Naive thymus-derived CD4-positive, alpha-beta T cell (primary cell): ENCODE measurements at regions of chr9 and their contacts with region 1.

Region 1: GRCh38 chr9:20490246-20490834 is 132.0 kb downstream of the MLLT3 start:
- DNase-seq: no peak
- ATAC-seq: no peak
- H3K4me3 ChIP-seq: no peak overlapping the region
- H3K4me3 Mint-ChIP-seq: peak overlapping the region in 4 of 10 donors; percentile 23 to 35 (median 30)
- H3K27ac ChIP-seq: no peak overlapping the region
- H3K27ac Mint-ChIP-seq: peak overlapping the region in 1 of 9 donors; percentile 48
- H3K4me1 ChIP-seq: peaks cover 0 to 24% of the 10 kb centered on the region in 2 donors
- H3K4me1 Mint-ChIP-seq: peaks cover 20 to 85% (median 70%) of the 10 kb centered on the region in 7 donors
- H3K27me3 ChIP-seq: no peaks in the 10 kb centered on the region
- H3K27me3 Mint-ChIP-seq: no peaks in the 10 kb centered on the region

Region 2: DNA sequence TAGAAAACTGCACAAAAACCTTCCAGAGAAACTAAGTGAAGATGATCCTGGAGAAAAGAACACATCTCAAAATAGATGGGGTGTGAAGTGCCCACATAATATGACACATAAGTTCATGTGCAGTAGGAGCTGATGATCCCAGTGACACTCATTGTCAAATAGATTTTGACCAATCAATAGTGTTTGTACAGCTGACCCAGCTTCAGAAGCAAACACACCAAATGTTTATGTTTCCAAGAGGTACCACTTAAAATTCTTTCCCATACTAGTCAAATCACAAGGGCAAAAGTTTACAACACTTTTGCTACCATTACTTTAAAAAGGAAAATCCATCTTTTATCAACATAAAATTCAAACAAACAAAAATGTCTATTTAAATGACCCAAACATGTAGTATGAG is 43.0 kb before region 1 on chr9:
- CTCF ChIA-PET with region 1: no interaction called
- POLR2A ChIA-PET with region 1: no interaction called
- intact Hi-C with region 1: loop called in 1 of 2 experiments (anchors 5 kb)
- DNase-seq: no peak
- ATAC-seq: no peak
- H3K4me3 ChIP-seq: no peak overlapping the region
- H3K4me3 Mint-ChIP-seq: no peak overlapping the region
- H3K27ac ChIP-seq: no peak overlapping the region
- H3K27ac Mint-ChIP-seq: no peak overlapping the region
- H3K4me1 ChIP-seq: peaks cover 0 to 8% of the 10 kb centered on the region in 2 donors
- H3K4me1 Mint-ChIP-seq: peaks cover 14 to 56% (median 35%) of the 10 kb centered on the region in 7 donors
- H3K27me3 ChIP-seq: no peaks in the 10 kb centered on the region
- H3K27me3 Mint-ChIP-seq: no peaks in the 10 kb centered on the region

Region 3: GRCh38 chr9:20479419-20480155 is 10.8 kb before region 1 on chr9:
- CTCF ChIA-PET with region 1: interaction called, 3 read pairs
- POLR2A ChIA-PET with region 1: no interaction called
- intact Hi-C with region 1: loop called in 1 of 2 experiments (anchors 2 kb)
- DNase-seq: no peak
- ATAC-seq: no peak
- H3K4me3 ChIP-seq: no peak overlapping the region
- H3K4me3 Mint-ChIP-seq: no peak overlapping the region
- H3K27ac ChIP-seq: no peak overlapping the region
- H3K27ac Mint-ChIP-seq: peak overlapping the region in 1 of 9 donors; percentile 60
- H3K4me1 ChIP-seq: peaks cover 0 to 10% of the 10 kb centered on the region in 2 donors
- H3K4me1 Mint-ChIP-seq: peaks cover 23 to 89% (median 77%) of the 10 kb centered on the region in 7 donors
- H3K27me3 ChIP-seq: no peaks in the 10 kb centered on the region
- H3K27me3 Mint-ChIP-seq: no peaks in the 10 kb centered on the region

Region 4: DNA sequence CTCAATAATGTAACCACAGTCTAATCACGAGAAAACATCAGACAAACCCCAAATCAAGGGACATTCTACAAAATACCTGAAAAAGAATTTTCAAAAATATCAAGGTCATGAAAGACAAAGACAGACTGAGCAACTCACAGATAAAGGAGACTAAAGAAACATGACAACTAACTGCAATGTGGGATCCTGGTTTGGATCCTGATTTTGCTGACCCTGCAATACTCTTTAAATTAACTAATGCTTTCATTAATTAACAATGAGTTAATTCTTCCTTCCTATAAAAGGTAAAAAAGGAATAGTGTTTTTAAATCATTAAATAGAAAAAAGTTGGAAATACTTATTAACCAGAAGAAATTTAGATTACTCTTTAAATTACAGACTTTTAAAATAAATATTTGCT is 28.4 kb after region 1 on chr9:
- CTCF ChIA-PET with region 1: no interaction called
- POLR2A ChIA-PET with region 1: no interaction called
- intact Hi-C with region 1: no loop called
- DNase-seq: no peak
- ATAC-seq: no peak
- H3K4me3 ChIP-seq: no peak overlapping the region
- H3K4me3 Mint-ChIP-seq: no peak overlapping the region
- H3K27ac ChIP-seq: no peak overlapping the region
- H3K27ac Mint-ChIP-seq: no peak overlapping the region
- H3K4me1 ChIP-seq: peaks cover under 1 to 31% of the 10 kb centered on the region in 2 donors
- H3K4me1 Mint-ChIP-seq: peaks cover 56 to 95% (median 87%) of the 10 kb centered on the region in 7 donors
- H3K27me3 ChIP-seq: no peaks in the 10 kb centered on the region
- H3K27me3 Mint-ChIP-seq: no peaks in the 10 kb centered on the region